ENCODE measurements at regions of chr7 and their contacts with region 1.

Region 1: DNA sequence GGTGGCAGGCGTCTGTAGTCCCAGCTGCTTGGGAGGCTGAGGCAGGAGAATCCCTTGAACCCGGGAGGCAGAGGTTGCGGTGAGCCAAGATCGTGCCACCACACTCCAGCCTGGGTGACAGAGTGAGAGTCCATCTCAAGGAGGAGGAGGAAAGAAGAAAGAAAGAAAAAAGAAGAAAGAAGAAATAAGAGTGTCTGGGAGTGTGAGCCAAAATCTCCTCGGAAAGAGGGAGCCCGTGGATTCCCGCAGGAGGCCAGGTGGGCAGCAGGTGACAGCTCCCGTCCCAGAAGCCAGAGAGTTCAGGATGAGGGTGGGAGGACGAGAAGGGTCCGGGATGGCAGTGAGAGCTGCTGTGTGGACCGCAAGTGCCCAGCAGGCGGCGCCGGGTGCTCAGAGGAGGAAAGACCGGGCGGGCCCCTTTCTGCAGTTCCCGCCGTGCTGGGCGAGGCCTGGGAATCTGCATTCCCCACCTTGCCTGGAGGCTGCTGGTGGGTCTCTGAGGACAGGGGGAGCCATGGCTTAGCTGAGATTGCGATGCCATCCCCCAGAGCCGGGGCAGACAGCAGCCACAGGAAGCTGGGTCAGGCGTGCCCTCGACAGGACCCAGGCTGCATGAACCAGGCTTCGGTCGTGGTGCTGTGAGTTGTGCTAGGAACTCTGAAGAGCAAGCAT is 17.1 kb upstream of the AMZ1 start:
- DNase-seq: peak; percentile 90
- H3K4me3 Mint-ChIP-seq: peak overlapping the region; percentile 6
- H3K27ac Mint-ChIP-seq: no peak overlapping the region
- H3K4me1 Mint-ChIP-seq: peaks cover 33% of the 10 kb centered on the region
- H3K27me3 Mint-ChIP-seq: peaks cover 54% of the 10 kb centered on the region
- CTCF ChIP-seq: peak; percentile 97

Region 2: GRCh38 chr7:2688409-2689331 is 17.8 kb after region 1 on chr7:
- CTCF ChIA-PET with region 1: no interaction called
- intact Hi-C with region 1: no loop called
- DNase-seq: no peak
- H3K4me3 Mint-ChIP-seq: peak overlapping the region; percentile 33
- H3K27ac Mint-ChIP-seq: no peak overlapping the region
- H3K4me1 Mint-ChIP-seq: peaks cover 34% of the 10 kb centered on the region
- H3K27me3 Mint-ChIP-seq: peaks cover 63% of the 10 kb centered on the region
- CTCF ChIP-seq: no peak

Region 3: DNA sequence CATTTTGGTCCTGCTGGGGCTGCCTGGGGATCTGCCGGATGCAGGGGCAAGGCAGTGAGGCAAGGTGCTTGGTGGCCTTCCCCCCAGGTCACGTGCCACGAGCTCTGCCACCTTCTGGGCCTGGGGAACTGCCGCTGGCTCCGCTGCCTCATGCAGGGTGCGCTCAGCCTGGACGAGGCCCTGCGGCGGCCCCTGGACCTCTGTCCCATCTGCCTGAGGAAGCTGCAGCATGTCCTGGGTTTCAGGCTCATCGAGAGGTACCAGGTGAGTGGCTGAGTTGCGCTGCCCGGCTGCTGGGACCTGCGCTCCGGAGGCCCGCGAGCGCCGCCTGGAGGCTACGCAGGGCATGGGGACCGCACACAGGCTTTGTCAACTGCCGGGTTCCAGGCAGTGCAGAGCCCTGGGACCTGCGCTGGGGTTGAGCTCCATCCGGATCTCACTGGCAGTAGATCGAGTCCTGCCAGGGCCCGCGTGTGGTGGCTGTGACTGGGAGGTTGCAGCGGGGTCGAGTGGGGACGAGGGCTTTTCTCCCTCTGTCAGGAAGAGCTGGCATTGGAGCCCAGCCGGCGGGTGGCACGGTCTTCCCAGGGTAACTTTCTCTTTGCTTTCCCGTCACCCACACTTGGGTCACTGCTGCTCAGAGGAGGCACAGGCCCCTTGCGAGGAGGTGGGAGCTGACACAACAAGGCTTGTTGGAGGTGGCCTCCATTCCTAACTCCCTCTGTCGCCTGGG is 38.9 kb after region 1 on chr7:
- CTCF ChIA-PET with region 1: interaction called, 16 read pairs
- intact Hi-C with region 1: no loop called
- DNase-seq: peak; percentile 92
- H3K4me3 Mint-ChIP-seq: peak overlapping the region; percentile 59
- H3K27ac Mint-ChIP-seq: peak overlapping the region; percentile 39
- H3K4me1 Mint-ChIP-seq: peaks cover 10% of the 10 kb centered on the region
- H3K27me3 Mint-ChIP-seq: no peaks in the 10 kb centered on the region
- CTCF ChIP-seq: peak; percentile 98

Region 4: DNA sequence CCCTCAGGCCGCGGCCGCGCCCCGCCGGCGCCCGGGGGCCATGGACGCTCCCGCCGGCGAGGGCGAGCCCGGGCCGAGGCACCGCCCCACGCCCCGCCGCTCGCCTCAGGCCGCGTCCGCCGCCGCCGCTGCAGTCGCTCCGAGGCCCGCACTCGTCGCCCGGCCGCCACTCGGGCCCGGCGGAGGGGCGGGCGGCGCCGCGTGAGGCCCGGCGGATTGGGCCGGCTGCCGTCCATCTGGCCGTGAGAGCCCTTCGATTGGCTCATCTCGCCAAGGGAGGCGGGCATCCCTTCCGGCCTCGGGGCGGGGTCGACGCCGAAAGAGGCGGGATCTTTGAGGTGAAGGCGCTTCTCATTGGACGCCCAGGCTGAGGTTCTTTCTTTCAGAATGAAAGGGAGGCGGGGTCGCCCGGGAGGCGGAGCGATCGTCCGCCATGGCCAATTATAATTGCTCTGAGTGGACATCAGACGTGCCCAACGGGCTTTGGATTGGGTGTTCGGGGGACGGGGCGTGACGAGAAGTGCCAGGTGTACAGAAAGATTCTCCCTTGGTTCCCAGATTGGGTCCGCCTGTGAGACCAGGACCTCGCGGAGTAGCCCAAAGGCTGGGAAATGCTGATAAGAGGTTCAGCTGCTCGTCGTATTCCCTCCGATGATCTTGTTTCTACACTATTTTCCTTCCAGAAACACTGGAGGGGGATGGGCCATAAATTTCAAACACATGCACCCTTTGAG is 173.5 kb after region 1 on chr7 and contains the start of gene GNA12:
- CTCF ChIA-PET with region 1: no interaction called
- intact Hi-C with region 1: no loop called
- DNase-seq: peak; percentile 100
- H3K4me3 Mint-ChIP-seq: peak within 1 kb of the TSS; percentile 81
- H3K27ac Mint-ChIP-seq: peak within 1 kb of the TSS; percentile 72
- H3K4me1 Mint-ChIP-seq: peaks cover 22% of the 10 kb centered on the region
- H3K27me3 Mint-ChIP-seq: no peaks in the 10 kb centered on the region
- CTCF ChIP-seq: no peak
- total RNA-seq, gene GNA12: 75.4 and 78.3 TPM in 2 replicates

Measured in Calu3 (cell line).